ENCODE measurements at regions of chr4 and their contacts with region 1.

Region 1: DNA sequence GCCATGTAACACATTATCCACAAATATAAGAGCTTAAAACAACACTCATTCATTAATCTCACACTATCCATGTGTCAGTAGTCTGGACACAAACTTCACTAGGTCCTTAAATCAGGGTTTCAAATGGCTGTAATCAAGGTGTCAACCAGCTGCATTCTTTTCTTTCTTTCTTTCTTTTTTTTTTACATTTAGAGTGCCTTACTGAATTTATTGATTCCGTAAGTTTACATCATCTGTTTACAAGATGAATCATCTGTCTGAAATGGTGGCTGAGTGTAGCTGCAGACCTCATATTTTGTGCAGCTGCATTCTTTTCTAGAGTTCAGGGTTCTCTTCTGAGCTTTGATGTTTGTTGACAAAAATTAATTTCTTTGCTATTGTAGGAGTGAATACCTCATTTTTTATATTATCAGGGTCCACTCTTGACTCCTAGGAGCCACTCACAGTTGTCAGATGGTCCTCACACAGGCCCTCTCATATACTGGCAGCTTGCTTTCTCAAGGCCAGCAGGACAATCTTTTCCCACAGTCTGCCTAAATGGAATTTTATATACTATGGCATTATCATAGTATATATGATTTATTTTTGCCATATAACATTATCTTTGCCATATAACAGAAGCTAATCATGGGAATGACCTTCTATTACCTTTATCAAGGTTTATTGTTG is 37.8 kb downstream of the SPOCK3 start:
- DNase-seq: no peak
- H3K4me3 Mint-ChIP-seq: no peak overlapping the region
- H3K27ac Mint-ChIP-seq: no peak overlapping the region
- H3K4me1 Mint-ChIP-seq: no peaks in the 10 kb centered on the region
- H3K27me3 Mint-ChIP-seq: no peaks in the 10 kb centered on the region

Region 2: DNA sequence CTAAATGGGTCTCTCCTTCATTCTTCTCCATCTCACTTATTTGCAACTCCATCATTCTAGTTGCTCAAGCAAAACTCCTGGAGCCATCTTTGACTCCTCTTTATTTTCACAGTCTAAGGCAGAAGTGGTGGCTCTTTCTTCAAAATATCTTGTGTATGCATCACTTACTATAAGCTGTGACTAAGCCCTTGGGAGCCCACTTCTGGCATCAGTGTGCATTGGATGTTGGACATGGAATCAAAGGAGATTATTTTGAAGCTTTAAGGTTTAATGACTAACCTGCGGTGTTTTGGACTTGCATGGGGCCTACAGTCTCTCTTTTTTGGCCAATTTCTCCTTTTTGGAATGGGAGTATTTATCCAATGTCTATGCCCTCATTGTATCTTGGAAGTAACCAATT is 239.0 kb before region 1 on chr4:
- intact Hi-C with region 1: no loop called
- DNase-seq: no peak
- H3K4me3 Mint-ChIP-seq: no peak overlapping the region
- H3K27ac Mint-ChIP-seq: no peak overlapping the region
- H3K4me1 Mint-ChIP-seq: no peaks in the 10 kb centered on the region
- H3K27me3 Mint-ChIP-seq: no peaks in the 10 kb centered on the region

Region 3: DNA sequence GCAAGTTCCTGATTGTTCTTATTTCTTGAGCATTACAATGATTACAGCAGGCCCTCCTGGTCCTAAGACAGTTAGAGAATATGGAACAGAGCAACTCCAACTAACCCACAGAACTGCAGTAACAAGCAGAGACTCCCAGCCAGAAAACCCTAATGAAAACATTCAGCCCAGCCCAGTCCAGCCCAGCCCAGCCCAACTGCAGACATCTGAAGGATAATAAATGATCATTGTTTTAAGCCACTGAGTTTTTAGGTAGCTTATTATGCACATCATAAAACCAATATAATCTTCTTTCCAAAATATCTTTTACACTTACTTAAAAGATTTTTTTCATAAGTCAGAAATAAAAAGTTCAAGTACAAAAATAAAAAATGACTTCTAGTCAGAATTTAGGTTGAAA is 13.4 kb before region 1 on chr4:
- intact Hi-C with region 1: loop called (anchors 1 kb)
- DNase-seq: no peak
- H3K4me3 Mint-ChIP-seq: no peak overlapping the region
- H3K27ac Mint-ChIP-seq: no peak overlapping the region
- H3K4me1 Mint-ChIP-seq: no peaks in the 10 kb centered on the region
- H3K27me3 Mint-ChIP-seq: no peaks in the 10 kb centered on the region

Region 4: GRCh38 chr4:167265231-167265630 is 68.8 kb after region 1 on chr4:
- intact Hi-C with region 1: no loop called
- DNase-seq: no peak
- H3K4me3 Mint-ChIP-seq: no peak overlapping the region
- H3K27ac Mint-ChIP-seq: no peak overlapping the region
- H3K4me1 Mint-ChIP-seq: no peaks in the 10 kb centered on the region
- H3K27me3 Mint-ChIP-seq: no peaks in the 10 kb centered on the region

Measured in activated CD4-positive, alpha-beta T cell treated with anti-CD3 and anti-CD28 coated beads, Interleukin-2, amount 10 ng/mL, durations not matched to agents 24 days and 14 days (primary cell).